ENCODE measurements at regions of chr11 and their contacts with region 1.

Region 1: DNA sequence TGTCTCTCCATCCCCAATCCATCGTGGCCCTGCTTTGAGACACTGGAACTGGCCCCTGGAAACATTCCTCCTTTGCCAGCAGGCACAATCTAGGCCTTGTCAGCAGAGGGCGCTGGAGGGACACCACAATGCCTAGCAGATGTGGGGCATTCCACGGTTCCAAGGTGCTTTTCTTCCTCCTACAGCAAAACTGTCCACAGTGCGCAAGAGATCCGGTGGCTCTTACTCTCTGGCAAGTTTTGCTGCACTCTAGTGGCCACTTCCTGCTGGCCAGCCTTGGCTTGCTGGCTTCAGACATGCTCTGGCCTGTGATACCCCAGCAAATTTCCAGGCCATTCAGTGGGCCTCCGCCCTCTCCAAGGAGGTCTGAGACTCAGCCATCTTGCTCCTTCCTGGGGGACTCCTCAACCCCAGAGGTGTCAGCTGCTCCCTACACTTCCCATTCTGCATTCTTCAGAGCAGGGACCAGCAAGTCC is 17.1 kb upstream of the RBM4B start:
- DNase-seq: peak; percentile 90 to 94 (median 92)
- ATAC-seq: peak; percentile 94 to 99 (median 98)
- H3K4me3 ChIP-seq: no peak overlapping the region
- H3K27ac ChIP-seq: no peak overlapping the region
- H3K4me1 ChIP-seq: no peaks in the 10 kb centered on the region
- H3K27me3 ChIP-seq: no peaks in the 10 kb centered on the region
- CTCF ChIP-seq: peak; percentile 88 to 95 (median 90)

Region 2: DNA sequence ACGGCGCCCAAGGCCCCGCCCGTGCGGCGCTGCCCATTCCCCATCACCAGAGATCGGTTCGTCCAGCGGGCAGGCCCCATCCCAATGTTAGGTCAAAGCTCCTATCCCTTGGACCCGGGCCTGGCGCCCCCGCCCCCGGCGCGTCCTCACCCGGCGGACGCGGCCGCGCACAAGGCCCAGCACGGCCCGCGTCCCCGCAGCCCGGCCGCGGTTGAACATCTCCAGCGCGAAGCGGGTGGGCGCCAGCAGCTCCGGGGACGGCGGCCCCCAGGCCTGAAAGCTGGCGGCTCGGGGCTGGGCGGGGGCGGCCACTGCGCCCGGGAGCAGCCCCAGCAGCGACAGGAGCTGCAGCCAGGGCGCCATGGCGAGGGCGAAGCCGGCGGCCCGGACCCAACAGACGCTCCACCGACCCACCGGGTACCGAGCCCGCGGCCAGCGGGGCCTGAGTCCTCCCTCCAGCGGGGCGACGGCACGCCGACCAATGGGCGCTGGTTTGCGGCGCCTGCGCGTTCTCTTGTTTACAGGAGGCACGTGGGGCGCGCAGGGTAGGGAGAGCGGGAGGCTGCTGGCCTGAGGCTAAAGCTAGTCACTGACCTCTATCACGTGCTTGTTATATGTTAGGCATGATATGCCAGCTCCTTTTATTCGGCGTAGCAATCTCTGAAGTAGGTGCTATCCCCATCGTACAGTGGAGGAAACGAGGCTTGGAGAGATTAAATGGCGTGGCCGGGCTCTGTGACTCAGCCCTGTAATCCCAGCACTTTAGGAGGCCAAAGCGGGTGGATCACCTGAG is 126.5 kb before region 1 on chr11 and contains the start of gene CTSF:
- intact Hi-C with region 1: no loop called
- DNase-seq: peak; percentile 84 to 95 (median 88)
- ATAC-seq: peak; percentile 98 to 99 (median 99)
- H3K4me3 ChIP-seq: peak within 1 kb of the TSS; percentile 56 to 79 (median 70)
- H3K27ac ChIP-seq: no peak within 1 kb of the TSS
- H3K4me1 ChIP-seq: peaks cover 0 to 4% (median 0%) of the 10 kb centered on the region in 3 donors
- H3K27me3 ChIP-seq: no peaks in the 10 kb centered on the region
- CTCF ChIP-seq: no peak
- total RNA-seq, gene CTSF: 10.6 to 31.4 (median 19.9) TPM

Region 3: GRCh38 chr11:66834501-66834845 is 139.7 kb after region 1 on chr11:
- intact Hi-C with region 1: loop called in 2 of 3 experiments (anchors 5 kb)
- DNase-seq: no peak
- ATAC-seq: peak in 2 of 4 donors; percentile 8 to 15
- H3K4me3 ChIP-seq: no peak overlapping the region
- H3K27ac ChIP-seq: no peak overlapping the region
- H3K4me1 ChIP-seq: no peaks in the 10 kb centered on the region
- H3K27me3 ChIP-seq: no peaks in the 10 kb centered on the region
- CTCF ChIP-seq: no peak

Region 4: GRCh38 chr11:66842896-66843775 is 148.4 kb after region 1 on chr11 and contains the start of gene RCE1:
- intact Hi-C with region 1: loop called in 1 of 3 experiments (anchors 5 kb)
- DNase-seq: peak; percentile 83 to 98 (median 94)
- ATAC-seq: peak; percentile 95 to 98 (median 98)
- H3K4me3 ChIP-seq: peak within 1 kb of the TSS; percentile 72 to 99 (median 90)
- H3K27ac ChIP-seq: peak within 1 kb of the TSS; percentile 84 to 96 (median 90)
- H3K4me1 ChIP-seq: peaks cover 7 to 18% (median 13%) of the 10 kb centered on the region in 3 donors
- H3K27me3 ChIP-seq: no peaks in the 10 kb centered on the region
- CTCF ChIP-seq: no peak
- total RNA-seq, gene RCE1: 8.2 to 13.2 (median 9.4) TPM